Activated CD4-positive, alpha-beta T cell treated with anti-CD3 and anti-CD28 coated beads, Interleukin-2, amount 10 ng/mL, durations not matched to agents 24 days and 14 days (primary cell): ENCODE measurements at regions of chr2 and their contacts with region 1.

Region 1: GRCh38 chr2:43219383-43220228 is 6.8 kb downstream of the ZFP36L2 start:
- DNase-seq: peak; percentile 95
- H3K4me3 Mint-ChIP-seq: peak overlapping the region; percentile 84
- H3K27ac Mint-ChIP-seq: peak overlapping the region; percentile 96
- H3K4me1 Mint-ChIP-seq: peaks cover 48% of the 10 kb centered on the region
- H3K27me3 Mint-ChIP-seq: peaks cover 2% of the 10 kb centered on the region

Region 2: DNA sequence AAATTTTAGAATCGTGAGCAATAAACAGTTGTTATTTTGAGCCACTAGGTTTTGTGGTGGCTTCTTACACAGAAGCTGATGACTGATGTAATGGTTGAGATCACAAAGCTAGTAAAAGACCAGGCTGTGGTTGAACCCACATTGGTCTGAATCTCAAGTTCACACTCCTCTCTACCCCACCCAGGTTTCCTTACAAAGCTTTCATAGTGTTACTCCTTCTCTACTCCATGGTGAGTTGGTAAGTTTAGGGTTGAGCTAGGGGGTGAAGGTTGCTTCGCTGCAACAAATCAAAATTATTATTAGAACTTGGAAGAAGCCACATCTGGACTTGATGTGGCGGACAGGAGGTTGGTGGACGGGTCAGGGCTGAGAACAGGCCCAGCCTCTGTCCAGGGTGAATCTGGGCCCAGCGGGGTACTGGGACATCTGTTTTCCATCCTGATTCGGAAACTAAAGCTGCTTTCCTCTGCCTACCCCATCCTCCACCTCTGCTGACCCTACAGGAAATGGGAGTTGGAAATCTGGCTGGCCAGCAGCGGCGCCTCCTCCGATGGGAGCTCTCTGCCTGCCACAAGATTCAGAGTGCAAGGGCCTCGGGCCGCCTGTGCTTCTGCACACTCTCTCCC is 79.5 kb before region 1 on chr2:
- intact Hi-C with region 1: loop called (anchors 1 kb)
- DNase-seq: peak; percentile 83
- H3K4me3 Mint-ChIP-seq: peak overlapping the region; percentile 62
- H3K27ac Mint-ChIP-seq: peak overlapping the region; percentile 85
- H3K4me1 Mint-ChIP-seq: peaks cover 63% of the 10 kb centered on the region
- H3K27me3 Mint-ChIP-seq: no peaks in the 10 kb centered on the region

Region 3: DNA sequence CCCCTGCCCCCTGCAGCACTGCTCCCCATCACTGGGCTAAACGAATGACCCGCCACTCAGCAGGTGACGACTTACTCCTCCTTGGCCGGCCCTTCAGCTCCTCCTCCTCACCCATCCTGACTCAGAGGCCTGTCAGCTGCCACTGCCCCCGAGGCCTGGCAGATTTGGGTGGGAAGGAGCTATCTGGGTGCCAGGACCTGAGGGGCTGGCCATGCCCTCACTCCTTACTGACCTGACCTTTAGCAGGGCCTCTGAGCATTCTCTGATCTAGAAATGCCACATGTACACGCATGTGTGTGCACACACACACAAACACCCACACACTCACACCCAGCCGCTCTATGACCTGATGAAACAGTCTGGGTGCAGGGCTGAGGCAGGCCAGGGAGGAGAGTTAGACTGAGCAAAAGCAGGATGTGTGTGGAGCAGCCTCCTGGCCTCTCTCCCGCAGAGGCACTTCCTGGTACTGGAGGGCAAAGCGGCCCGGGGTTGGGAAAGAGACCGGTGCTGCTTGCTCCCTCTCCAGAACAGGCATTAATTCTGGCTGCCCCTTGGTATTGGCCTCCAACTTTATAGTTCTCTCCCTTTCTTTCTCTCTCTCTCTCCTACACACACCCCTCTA is 61.2 kb before region 1 on chr2:
- intact Hi-C with region 1: loop called (anchors 1 kb)
- DNase-seq: peak; percentile 89
- H3K4me3 Mint-ChIP-seq: peak overlapping the region; percentile 78
- H3K27ac Mint-ChIP-seq: peak overlapping the region; percentile 98
- H3K4me1 Mint-ChIP-seq: peaks cover 56% of the 10 kb centered on the region
- H3K27me3 Mint-ChIP-seq: no peaks in the 10 kb centered on the region

Region 4: DNA sequence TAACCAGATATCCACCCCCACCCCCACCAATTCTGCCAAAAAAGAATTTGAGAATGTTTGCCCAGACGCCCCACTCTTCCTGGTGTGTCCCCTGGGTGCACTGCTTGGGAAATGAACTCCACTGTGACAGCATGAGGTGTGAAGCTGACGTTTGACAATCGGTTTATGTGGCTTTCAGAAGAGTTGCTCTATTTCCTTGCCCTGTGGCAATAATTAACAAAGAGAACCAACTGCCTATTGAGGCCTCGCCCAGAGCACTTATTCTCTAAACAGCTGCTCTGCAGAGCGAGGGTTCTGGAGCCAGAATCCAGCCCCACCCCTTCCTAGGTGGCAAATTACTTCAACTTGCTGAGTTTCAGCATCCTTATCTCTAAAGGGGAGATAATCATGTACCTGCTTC is 1606.1 kb after region 1 on chr2:
- intact Hi-C with region 1: no loop called
- DNase-seq: no peak
- H3K4me3 Mint-ChIP-seq: no peak overlapping the region
- H3K27ac Mint-ChIP-seq: no peak overlapping the region
- H3K4me1 Mint-ChIP-seq: no peaks in the 10 kb centered on the region
- H3K27me3 Mint-ChIP-seq: no peaks in the 10 kb centered on the region